Heart right ventricle (tissue), 16 donors: ENCODE measurements at regions of chr3 and their contacts with region 1.

Region 1: GRCh38 chr3:177827511-177828207 is 630.4 kb upstream of the TBL1XR1 start:
- DNase-seq: no peak
- ATAC-seq: no peak
- H3K4me3 ChIP-seq: no peak overlapping the region
- H3K27ac ChIP-seq: peak overlapping the region in 1 of 10 donors; percentile 45
- H3K4me1 ChIP-seq: peaks cover 9 to 38% (median 34%) of the 10 kb centered on the region in 9 donors
- H3K27me3 ChIP-seq: no peaks in the 10 kb centered on the region
- CTCF ChIP-seq: no peak

Region 2: DNA sequence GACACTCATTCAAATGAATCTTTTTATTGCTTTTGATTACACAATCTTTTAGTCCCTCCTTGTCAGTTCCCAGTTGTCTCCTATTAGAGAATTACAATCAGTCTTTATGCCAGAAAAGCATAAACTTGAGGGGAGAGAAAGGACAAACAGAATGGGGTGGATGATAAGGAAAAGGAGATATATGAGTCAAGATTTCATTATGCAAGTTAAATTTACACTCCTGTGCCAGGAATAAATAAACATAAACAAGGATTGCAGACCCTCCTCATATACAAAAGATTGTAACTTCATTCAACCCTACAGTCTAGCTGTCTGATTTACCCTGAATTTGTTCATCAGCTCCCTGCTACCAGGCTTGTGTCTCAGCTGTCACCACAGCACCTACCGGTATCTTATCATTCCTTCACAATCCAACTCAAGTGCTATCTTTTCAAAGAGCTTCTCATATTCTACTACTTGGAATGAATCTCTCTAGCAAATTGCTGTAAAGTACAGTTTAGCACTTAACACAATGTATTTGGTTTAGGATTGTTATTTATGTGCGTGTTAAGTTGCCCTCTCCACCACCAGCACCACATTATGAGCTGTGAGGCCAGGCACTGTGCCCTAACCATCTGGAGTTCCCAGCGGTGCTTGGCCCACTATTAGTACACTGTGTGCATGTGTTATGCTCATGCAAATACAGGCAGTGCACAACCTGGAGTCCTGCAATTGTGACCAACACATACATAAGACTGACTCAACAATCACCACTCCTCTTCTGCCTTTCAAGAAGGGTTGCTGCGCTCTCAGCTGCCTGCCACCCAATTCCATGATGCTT is 1134.5 kb before region 1 on chr3:
- intact Hi-C with region 1: no loop called
- DNase-seq: no peak
- ATAC-seq: peak in 4 of 8 donors; percentile 52 to 89 (median 62)
- H3K4me3 ChIP-seq: no peak overlapping the region
- H3K27ac ChIP-seq: no peak overlapping the region
- H3K4me1 ChIP-seq: no peaks in the 10 kb centered on the region
- H3K27me3 ChIP-seq: no peaks in the 10 kb centered on the region
- CTCF ChIP-seq: no peak

Region 3: DNA sequence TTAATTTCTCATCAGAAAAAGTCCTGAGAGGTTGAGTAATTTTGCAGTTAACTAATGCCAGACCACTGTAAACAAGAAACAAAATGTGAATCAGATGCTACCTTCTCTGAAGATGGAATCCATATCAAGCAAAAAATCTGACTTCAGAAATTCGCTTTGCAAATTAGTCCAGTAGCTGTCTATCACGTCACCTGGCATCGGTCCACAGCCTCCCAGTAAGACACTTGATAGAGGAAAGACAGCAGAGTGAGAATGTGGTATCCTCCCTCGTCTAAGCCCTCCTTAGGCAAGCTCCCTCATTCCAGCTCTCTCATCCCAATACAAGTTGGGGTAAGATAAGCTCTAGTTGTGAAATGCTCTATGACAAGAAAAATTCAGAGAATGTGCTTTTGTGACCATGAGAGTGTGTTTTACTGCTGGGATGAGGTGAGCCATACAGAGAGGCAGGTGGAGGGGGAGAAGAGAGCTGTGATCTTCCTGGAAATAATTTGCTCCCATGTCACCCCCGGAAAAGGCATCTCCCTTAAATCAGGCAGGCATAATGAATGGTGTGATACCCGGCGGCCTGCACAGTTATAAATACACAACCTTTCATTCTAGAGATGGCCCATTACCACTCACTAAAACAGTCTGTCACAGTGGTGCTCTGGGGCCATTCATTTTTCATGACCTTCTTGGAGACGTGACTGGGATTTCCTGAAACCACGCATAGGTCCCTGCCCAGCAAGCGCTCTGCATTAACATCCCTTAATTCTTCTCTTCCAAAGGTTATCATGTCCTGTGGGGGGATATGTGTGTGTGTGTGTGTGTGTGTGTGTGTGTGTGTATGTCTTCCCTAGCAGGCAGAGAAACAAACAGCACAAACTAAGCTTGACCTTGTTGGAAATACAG is 106.6 kb after region 1 on chr3:
- intact Hi-C with region 1: loop called in 1 of 10 experiments (anchors 5 kb)
- DNase-seq: peak in 1 of 2 donors; percentile 9
- ATAC-seq: peak in 2 of 8 donors; percentile 33 to 38
- H3K4me3 ChIP-seq: no peak overlapping the region
- H3K27ac ChIP-seq: no peak overlapping the region
- H3K4me1 ChIP-seq: peaks cover 0 to 41% (median 26%) of the 10 kb centered on the region in 9 donors
- H3K27me3 ChIP-seq: no peaks in the 10 kb centered on the region
- CTCF ChIP-seq: no peak

Region 4: GRCh38 chr3:178078953-178079352 is 251.3 kb after region 1 on chr3:
- intact Hi-C with region 1: loop called in 1 of 10 experiments (anchors 10 kb)
- DNase-seq: peak in 1 of 2 donors; percentile 82
- ATAC-seq: peak; percentile 62 to 92 (median 80)
- H3K4me3 ChIP-seq: no peak overlapping the region
- H3K27ac ChIP-seq: peak overlapping the region in 7 of 10 donors; percentile 30 to 63 (median 49)
- H3K4me1 ChIP-seq: peaks cover 2 to 41% (median 31%) of the 10 kb centered on the region in 9 donors
- H3K27me3 ChIP-seq: no peaks in the 10 kb centered on the region
- CTCF ChIP-seq: no peak